CD4-positive, alpha-beta memory T cell (primary cell): ENCODE measurements at regions of chr19 and their contacts with region 1.

Region 1: DNA sequence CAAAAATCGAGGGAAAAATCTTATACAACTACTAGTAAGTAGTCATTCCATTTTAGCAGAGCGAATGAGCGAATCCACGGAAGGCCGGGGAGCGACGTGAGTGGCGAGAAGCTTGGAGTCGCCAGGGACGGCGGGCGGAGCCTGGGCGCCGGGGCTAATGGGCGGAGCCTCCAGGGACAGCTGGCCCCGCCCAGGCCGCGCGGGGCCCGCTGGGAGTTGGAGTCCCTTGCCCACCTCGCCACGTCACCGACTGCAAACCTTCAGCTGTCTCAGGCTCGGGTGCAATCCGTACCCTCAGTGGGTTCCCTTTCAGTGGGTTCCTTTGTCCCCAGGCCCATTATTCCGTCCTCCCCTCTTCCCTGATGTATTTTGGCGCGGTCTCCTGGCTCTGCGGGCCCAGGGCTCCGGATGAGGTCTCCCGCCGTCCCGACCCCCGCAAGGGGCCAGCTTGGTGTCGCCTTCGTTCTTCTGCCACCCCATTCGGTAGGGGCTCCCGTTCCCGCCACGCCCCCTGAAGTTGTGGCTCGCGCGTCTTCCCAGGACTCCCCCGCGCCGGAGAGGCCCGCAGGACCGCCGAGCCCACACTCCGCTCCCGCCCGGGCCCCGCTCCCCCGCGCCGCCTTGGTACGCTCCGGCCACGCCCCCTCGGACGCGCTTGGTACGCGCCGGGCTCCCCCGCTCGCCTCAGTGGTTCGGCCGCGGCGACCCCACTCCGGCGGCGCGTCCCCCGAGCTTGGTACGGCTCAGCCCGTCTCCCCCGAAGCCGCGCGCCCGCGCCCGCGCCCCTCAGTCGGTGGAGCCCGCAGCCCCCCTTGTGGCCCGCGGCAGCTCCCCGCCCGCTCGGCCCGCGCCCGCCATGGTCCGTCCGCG is at the start of gene PTOV1:
- DNase-seq: peak; percentile 84 to 90 (median 87)
- H3K4me3 ChIP-seq: peak within 1 kb of the TSS; percentile 54 to 88
- H3K4me3 Mint-ChIP-seq: peak within 1 kb of the TSS; percentile 90 to 97 (median 93)
- H3K27ac ChIP-seq: peak within 1 kb of the TSS; percentile 98
- H3K27ac Mint-ChIP-seq: peak within 1 kb of the TSS; percentile 92 to 98 (median 97)
- H3K4me1 ChIP-seq: peaks cover 42% of the 10 kb centered on the region
- H3K4me1 Mint-ChIP-seq: peaks cover 29 to 49% (median 39%) of the 10 kb centered on the region in 4 donors
- H3K27me3 ChIP-seq: no peaks in the 10 kb centered on the region
- H3K27me3 Mint-ChIP-seq: no peaks in the 10 kb centered on the region
- total RNA-seq, gene PTOV1: 150 to 156 TPM

Region 2: DNA sequence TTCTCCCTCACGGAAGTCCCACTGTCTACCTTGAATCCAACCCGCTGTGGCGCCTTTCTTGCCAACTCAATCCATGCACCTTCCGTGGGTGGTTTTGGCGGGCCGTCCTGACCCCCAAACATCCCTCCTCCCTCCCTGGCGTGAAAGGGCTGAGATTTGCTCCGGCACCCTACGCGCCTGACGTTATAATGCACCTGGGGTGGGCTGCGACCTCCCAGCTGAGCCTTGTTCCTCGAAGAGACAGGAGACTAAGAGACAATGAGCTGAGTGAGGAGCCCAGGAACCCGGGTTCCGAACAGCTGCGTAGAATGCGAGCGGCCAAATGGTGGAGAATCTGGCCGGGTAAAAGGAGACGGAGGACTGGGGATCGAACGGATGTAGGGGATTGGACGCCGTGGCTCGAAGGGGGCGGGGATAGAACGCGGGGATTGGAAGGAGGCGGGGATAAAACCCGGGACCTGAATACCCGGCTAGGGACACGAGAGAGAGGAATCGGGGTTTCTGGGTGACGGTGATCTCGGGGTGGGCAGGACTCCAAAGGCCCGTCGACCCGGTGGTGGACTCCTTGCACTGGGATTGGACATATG is 160.0 kb before region 1 on chr19 and contains the start of gene CPT1C:
- CTCF ChIA-PET with region 1: no interaction called
- POLR2A ChIA-PET with region 1: no interaction called
- intact Hi-C with region 1: no loop called
- DNase-seq: peak; percentile 29 to 67 (median 40)
- H3K4me3 ChIP-seq: peak within 1 kb of the TSS in 1 of 2 donors; percentile 49
- H3K4me3 Mint-ChIP-seq: peak within 1 kb of the TSS; percentile 85 to 94 (median 90)
- H3K27ac ChIP-seq: peak within 1 kb of the TSS; percentile 30
- H3K27ac Mint-ChIP-seq: peak within 1 kb of the TSS; percentile 38 to 84 (median 45)
- H3K4me1 ChIP-seq: peaks cover 27% of the 10 kb centered on the region
- H3K4me1 Mint-ChIP-seq: peaks cover 14 to 27% (median 17%) of the 10 kb centered on the region in 4 donors
- H3K27me3 ChIP-seq: peaks cover 4% of the 10 kb centered on the region
- H3K27me3 Mint-ChIP-seq: peaks cover 10 to 16% of the 10 kb centered on the region in 2 donors
- total RNA-seq, gene CPT1C: 0.64 to 1.5 TPM

Region 3: GRCh38 chr19:49712397-49712859 is 138.3 kb before region 1 on chr19:
- CTCF ChIA-PET with region 1: interaction called, 6 read pairs
- POLR2A ChIA-PET with region 1: interaction called, 12 read pairs
- intact Hi-C with region 1: no loop called
- DNase-seq: no peak
- H3K4me3 ChIP-seq: no peak overlapping the region
- H3K4me3 Mint-ChIP-seq: no peak overlapping the region
- H3K27ac ChIP-seq: no peak overlapping the region
- H3K27ac Mint-ChIP-seq: no peak overlapping the region
- H3K4me1 ChIP-seq: peaks cover 4% of the 10 kb centered on the region
- H3K4me1 Mint-ChIP-seq: peaks cover 2 to 8% (median 5%) of the 10 kb centered on the region in 4 donors
- H3K27me3 ChIP-seq: no peaks in the 10 kb centered on the region
- H3K27me3 Mint-ChIP-seq: peaks cover 0 to 3% of the 10 kb centered on the region in 2 donors

Region 4: GRCh38 chr19:49749055-49749716 is 101.5 kb before region 1 on chr19:
- CTCF ChIA-PET with region 1: no interaction called
- POLR2A ChIA-PET with region 1: no interaction called
- intact Hi-C with region 1: no loop called
- DNase-seq: no peak
- H3K4me3 ChIP-seq: no peak overlapping the region
- H3K4me3 Mint-ChIP-seq: no peak overlapping the region
- H3K27ac ChIP-seq: no peak overlapping the region
- H3K27ac Mint-ChIP-seq: no peak overlapping the region
- H3K4me1 ChIP-seq: no peaks in the 10 kb centered on the region
- H3K4me1 Mint-ChIP-seq: peaks cover 0 to 4% (median 0%) of the 10 kb centered on the region in 4 donors
- H3K27me3 ChIP-seq: no peaks in the 10 kb centered on the region
- H3K27me3 Mint-ChIP-seq: peaks cover 0 to 1% of the 10 kb centered on the region in 2 donors

Region 5: DNA sequence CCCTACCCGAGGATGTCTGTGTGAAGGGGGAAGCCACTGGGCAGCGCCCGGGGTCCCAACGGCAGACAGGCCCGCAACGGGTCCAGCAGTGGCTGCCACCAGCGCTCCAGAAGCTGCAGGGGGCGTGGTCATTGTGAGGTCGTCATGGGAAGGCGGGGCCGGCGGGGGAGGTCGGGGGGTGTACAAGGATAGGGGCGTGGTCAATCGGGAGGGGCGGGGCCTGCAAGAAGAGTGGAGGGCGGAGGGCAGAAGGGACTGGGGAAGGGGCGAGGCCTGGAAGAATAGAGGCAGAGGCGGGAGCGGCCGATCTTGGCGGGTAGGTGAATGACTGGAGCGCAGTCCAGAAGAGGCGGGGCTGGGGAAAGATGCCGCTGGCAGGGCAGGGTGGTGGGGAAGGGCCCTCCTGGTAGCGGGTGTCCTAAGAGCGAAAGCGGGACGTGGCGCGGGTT is 42.0 kb before region 1 on chr19:
- CTCF ChIA-PET with region 1: no interaction called
- POLR2A ChIA-PET with region 1: interaction called, 53 read pairs
- intact Hi-C with region 1: loop called (anchors 1 kb)
- DNase-seq: peak; percentile 79 to 94 (median 85)
- H3K4me3 ChIP-seq: peak overlapping the region; percentile 36 to 68
- H3K4me3 Mint-ChIP-seq: peak overlapping the region; percentile 86 to 98 (median 90)
- H3K27ac ChIP-seq: peak overlapping the region; percentile 71
- H3K27ac Mint-ChIP-seq: peak overlapping the region; percentile 91 to 97 (median 94)
- H3K4me1 ChIP-seq: peaks cover 27% of the 10 kb centered on the region
- H3K4me1 Mint-ChIP-seq: peaks cover 15 to 39% (median 27%) of the 10 kb centered on the region in 4 donors
- H3K27me3 ChIP-seq: no peaks in the 10 kb centered on the region
- H3K27me3 Mint-ChIP-seq: no peaks in the 10 kb centered on the region

Region 6: GRCh38 chr19:49817964-49818648 is 32.6 kb before region 1 on chr19 and contains the start of gene MED25:
- CTCF ChIA-PET with region 1: interaction called, 3 read pairs
- POLR2A ChIA-PET with region 1: interaction called, 53 read pairs
- intact Hi-C with region 1: loop called (anchors 1 kb)
- DNase-seq: peak; percentile 90 to 96 (median 95)
- H3K4me3 ChIP-seq: peak within 1 kb of the TSS; percentile 64 to 88
- H3K4me3 Mint-ChIP-seq: peak within 1 kb of the TSS; percentile 89 to 99 (median 99)
- H3K27ac ChIP-seq: peak within 1 kb of the TSS; percentile 95
- H3K27ac Mint-ChIP-seq: peak within 1 kb of the TSS; percentile 98 to 100 (median 100)
- H3K4me1 ChIP-seq: peaks cover 33% of the 10 kb centered on the region
- H3K4me1 Mint-ChIP-seq: peaks cover 17 to 54% (median 36%) of the 10 kb centered on the region in 4 donors
- H3K27me3 ChIP-seq: no peaks in the 10 kb centered on the region
- H3K27me3 Mint-ChIP-seq: no peaks in the 10 kb centered on the region
- total RNA-seq, gene MED25: 41.8 to 48.8 TPM

Region 7: DNA sequence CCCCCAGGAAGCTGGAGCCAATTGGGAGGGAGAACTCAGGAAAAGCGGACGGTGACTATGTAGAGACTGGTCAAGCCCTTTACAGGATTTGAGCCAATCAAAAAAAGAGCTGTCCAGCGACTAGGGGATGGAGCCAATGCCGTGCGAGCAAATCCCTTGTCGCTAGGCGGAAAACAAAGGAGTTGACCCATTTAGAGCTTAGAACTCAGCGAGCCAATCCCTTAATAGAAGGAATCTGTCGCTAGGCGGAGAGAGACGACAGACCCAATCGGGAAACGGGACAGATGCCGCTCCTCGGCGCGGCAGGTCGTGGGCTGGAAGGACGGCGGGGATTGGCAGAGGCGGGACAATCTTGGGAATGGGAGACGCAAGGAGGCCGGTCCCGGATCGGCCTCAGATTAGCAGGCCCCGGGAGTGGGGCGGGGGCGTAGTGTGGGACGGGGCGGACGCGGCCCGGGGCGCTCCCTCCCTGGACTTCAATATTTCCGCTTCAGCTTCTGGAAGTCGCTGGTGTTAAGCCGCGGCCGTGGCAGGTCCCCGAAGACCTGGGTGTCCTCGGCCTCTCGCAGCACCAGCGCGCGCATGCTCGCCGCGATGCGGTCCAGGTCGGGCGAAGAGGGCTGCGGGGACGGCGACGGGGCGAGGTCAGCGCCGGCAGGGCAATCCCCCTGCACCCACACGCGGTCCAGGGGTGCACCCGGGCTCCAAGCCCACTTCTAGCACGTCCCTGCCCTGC is 18.9 kb after region 1 on chr19:
- CTCF ChIA-PET with region 1: interaction called, 3 read pairs
- POLR2A ChIA-PET with region 1: interaction called, 173 read pairs
- intact Hi-C with region 1: loop called (anchors 1 kb)
- DNase-seq: peak; percentile 92 to 94 (median 92)
- H3K4me3 ChIP-seq: peak overlapping the region; percentile 47 to 70
- H3K4me3 Mint-ChIP-seq: peak overlapping the region in 3 of 8 donors; percentile 78 to 87 (median 81)
- H3K27ac ChIP-seq: peak overlapping the region; percentile 66
- H3K27ac Mint-ChIP-seq: peak overlapping the region in 5 of 7 donors; percentile 88 to 94 (median 92)
- H3K4me1 ChIP-seq: peaks cover 53% of the 10 kb centered on the region
- H3K4me1 Mint-ChIP-seq: peaks cover 17 to 43% (median 22%) of the 10 kb centered on the region in 4 donors
- H3K27me3 ChIP-seq: no peaks in the 10 kb centered on the region
- H3K27me3 Mint-ChIP-seq: no peaks in the 10 kb centered on the region

Region 8: DNA sequence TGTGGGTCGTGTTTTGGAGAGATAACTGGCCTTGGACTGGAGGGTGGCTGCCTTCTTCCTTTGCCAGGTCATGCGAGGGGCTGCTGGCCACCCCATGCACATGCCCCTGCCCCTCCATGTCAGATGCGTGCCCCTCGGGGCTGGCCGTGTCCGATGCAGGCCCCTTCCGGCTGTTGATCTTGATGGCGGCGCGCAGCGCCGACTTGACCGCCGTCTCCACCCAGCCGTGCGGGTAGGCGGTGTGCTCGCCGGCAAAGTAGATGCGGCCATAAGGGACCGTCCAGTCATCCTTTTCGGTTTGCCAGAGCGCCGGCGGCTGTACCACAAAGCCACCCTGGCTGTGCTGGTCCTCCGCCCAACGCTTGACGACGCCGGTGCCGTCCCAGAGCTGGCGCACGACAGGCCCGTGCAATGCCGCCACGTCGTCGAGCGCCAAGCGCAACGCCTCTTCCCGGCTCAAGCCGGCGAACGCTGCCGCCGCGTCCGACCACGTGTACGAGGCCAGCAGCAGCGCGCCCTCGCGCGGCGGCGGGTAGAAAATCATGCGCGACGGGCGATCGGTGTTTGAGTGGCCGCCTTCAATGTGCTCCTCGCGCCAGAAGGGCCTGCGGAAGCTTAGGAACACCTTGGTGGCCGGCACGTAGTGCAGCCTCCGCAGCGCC is 39.1 kb after region 1 on chr19:
- CTCF ChIA-PET with region 1: interaction called, 4 read pairs
- POLR2A ChIA-PET with region 1: interaction called, 17 read pairs
- intact Hi-C with region 1: loop called (anchors 1 kb)
- DNase-seq: peak; percentile 77 to 79 (median 77)
- H3K4me3 ChIP-seq: peak overlapping the region in 1 of 2 donors; percentile 63
- H3K4me3 Mint-ChIP-seq: peak overlapping the region; percentile 77 to 85 (median 80)
- H3K27ac ChIP-seq: peak overlapping the region; percentile 39
- H3K27ac Mint-ChIP-seq: peak overlapping the region; percentile 81 to 95 (median 90)
- H3K4me1 ChIP-seq: peaks cover 10% of the 10 kb centered on the region
- H3K4me1 Mint-ChIP-seq: peaks cover 4 to 34% (median 23%) of the 10 kb centered on the region in 4 donors
- H3K27me3 ChIP-seq: no peaks in the 10 kb centered on the region
- H3K27me3 Mint-ChIP-seq: no peaks in the 10 kb centered on the region